Right cardiac atrium (tissue), 5 donors: ENCODE measurements at regions of chr7 and their contacts with region 1.

Region 1: DNA sequence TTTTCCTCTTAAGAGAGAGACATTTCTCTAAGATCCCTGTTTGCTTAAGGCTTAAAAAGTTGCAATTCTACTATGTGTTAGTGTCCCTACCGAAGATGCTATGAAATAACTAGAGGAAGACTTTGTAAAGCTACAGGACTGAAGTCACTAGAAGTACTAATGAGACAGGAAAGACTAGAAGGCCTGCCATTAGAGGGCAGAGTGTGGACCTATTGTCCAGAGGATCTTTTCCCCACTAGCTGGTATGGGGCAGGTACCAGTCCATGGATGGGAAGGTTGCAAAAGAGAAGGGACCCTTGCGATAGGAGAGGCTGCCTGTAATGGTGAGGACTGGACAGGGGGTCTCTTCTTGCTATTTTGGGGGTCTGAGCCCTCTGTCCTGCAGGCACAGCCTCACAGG is 178.1 kb downstream of the TMEM178B start:
- DNase-seq: no peak
- ATAC-seq: no peak
- H3K4me3 ChIP-seq: no peak overlapping the region
- H3K27ac ChIP-seq: no peak overlapping the region
- H3K4me1 ChIP-seq: no peaks in the 10 kb centered on the region
- H3K27me3 ChIP-seq: no peaks in the 10 kb centered on the region

Region 2: DNA sequence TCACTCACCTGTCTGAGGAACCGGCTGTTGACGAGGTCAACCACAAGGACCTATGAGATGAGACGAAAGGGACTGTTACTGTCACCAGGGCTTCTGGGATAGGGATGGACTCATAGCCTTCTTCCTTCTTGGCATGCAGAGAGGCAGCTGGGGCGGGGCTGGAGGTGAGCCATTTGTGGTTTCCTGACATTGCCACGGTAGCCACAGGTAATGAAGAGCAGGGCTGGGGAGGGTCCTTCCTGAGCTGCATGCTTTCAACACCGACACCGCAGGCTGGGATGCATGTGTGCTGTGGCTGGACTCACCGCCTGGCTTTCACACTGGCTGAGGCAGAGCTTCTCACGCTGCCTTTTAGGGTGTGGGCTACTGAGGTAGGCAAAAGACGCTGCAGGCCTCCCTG is 726.2 kb before region 1 on chr7:
- intact Hi-C with region 1: no loop called
- DNase-seq: no peak
- ATAC-seq: no peak
- H3K4me3 ChIP-seq: no peak overlapping the region
- H3K27ac ChIP-seq: no peak overlapping the region
- H3K4me1 ChIP-seq: no peaks in the 10 kb centered on the region
- H3K27me3 ChIP-seq: no peaks in the 10 kb centered on the region

Region 3: GRCh38 chr7:141522657-141523342 is 270.8 kb after region 1 on chr7:
- intact Hi-C with region 1: loop called in 1 of 4 experiments (anchors 10 kb)
- DNase-seq: no peak
- ATAC-seq: no peak
- H3K4me3 ChIP-seq: no peak overlapping the region
- H3K27ac ChIP-seq: no peak overlapping the region
- H3K4me1 ChIP-seq: no peaks in the 10 kb centered on the region
- H3K27me3 ChIP-seq: no peaks in the 10 kb centered on the region